Right ventricle myocardium inferior (tissue), 1 donor: ENCODE measurements at regions of chr10 and their contacts with region 1.

Region 1: GRCh38 chr10:55287346-55287745 is 486.3 kb upstream of the PCDH15 start:
- DNase-seq: no peak
- ATAC-seq: no peak

Region 2: DNA sequence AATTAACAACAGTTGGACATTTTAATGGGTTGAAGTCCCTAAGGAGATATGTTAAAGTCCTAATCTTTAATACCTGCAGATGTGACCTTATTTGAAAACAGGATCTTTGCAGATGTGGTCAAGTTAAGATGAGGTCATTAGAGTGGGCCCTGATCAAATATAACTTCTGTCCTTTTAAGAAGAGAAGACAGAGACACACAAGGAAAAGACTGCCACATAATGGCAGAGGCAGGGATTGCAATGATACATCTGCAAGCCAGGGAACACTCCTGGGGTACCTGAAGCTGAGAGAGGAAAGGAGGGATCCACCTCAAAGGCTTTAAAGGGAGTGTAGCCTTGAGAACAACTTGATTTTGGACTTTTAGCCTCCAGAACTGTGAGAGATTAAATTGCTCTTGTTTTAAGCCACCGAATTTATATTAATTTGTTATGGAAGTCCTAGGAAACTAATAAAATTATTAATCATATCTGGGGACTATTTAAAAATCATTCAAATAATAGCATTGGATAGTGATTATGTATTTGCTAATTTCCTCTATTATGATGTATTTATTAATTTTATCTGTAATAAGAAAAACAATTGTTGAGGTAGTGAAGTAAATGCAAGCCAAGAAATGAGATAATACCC is 213.7 kb after region 1 on chr10:
- intact Hi-C with region 1: loop called (anchors 10 kb)
- DNase-seq: no peak
- ATAC-seq: no peak